ENCODE measurements at regions of chr2 and their contacts with region 1.

Region 1: GRCh38 chr2:144516981-144517865 is 2.7 kb downstream of the ZEB2 start:
- DNase-seq: peak; percentile 91
- H3K4me3 ChIP-seq: peak overlapping the region; percentile 44 to 81 (median 62)
- H3K27ac ChIP-seq: peak overlapping the region; percentile 92 to 99 (median 98)
- H3K4me1 ChIP-seq: peaks cover 6 to 72% (median 50%) of the 10 kb centered on the region in 6 donors
- H3K27me3 ChIP-seq: peaks cover 0 to 16% (median 0%) of the 10 kb centered on the region in 7 donors
- CTCF ChIP-seq: no peak
- POLR2A ChIP-seq: no peak

Region 2: GRCh38 chr2:144332356-144333142 is 184.7 kb before region 1 on chr2:
- intact Hi-C with region 1: loop called (anchors 5 kb)
- DNase-seq: peak; percentile 98
- H3K4me3 ChIP-seq: peak overlapping the region; percentile 43 to 94 (median 82)
- H3K27ac ChIP-seq: peak overlapping the region; percentile 69 to 96 (median 94)
- H3K4me1 ChIP-seq: peaks cover 6 to 49% (median 26%) of the 10 kb centered on the region in 6 donors
- H3K27me3 ChIP-seq: no peaks in the 10 kb centered on the region
- CTCF ChIP-seq: no peak
- POLR2A ChIP-seq: peak in 2 of 3 donors; percentile 38 to 56

Region 3: GRCh38 chr2:144461308-144461766 is 55.9 kb before region 1 on chr2:
- intact Hi-C with region 1: loop called (anchors 10 kb)
- DNase-seq: no peak
- H3K4me3 ChIP-seq: peak overlapping the region in 1 of 8 donors; percentile 13
- H3K27ac ChIP-seq: peak overlapping the region in 7 of 8 donors; percentile 56 to 84 (median 68)
- H3K4me1 ChIP-seq: peaks cover 64 to 95% (median 74%) of the 10 kb centered on the region in 6 donors
- H3K27me3 ChIP-seq: no peaks in the 10 kb centered on the region
- CTCF ChIP-seq: no peak
- POLR2A ChIP-seq: no peak

Region 4: GRCh38 chr2:144770616-144771230 is 253.5 kb after region 1 on chr2:
- intact Hi-C with region 1: no loop called
- DNase-seq: no peak
- H3K4me3 ChIP-seq: no peak overlapping the region
- H3K27ac ChIP-seq: no peak overlapping the region
- H3K4me1 ChIP-seq: peaks cover 0 to 5% (median 0%) of the 10 kb centered on the region in 6 donors
- H3K27me3 ChIP-seq: no peaks in the 10 kb centered on the region
- CTCF ChIP-seq: no peak
- POLR2A ChIP-seq: no peak

Region 5: DNA sequence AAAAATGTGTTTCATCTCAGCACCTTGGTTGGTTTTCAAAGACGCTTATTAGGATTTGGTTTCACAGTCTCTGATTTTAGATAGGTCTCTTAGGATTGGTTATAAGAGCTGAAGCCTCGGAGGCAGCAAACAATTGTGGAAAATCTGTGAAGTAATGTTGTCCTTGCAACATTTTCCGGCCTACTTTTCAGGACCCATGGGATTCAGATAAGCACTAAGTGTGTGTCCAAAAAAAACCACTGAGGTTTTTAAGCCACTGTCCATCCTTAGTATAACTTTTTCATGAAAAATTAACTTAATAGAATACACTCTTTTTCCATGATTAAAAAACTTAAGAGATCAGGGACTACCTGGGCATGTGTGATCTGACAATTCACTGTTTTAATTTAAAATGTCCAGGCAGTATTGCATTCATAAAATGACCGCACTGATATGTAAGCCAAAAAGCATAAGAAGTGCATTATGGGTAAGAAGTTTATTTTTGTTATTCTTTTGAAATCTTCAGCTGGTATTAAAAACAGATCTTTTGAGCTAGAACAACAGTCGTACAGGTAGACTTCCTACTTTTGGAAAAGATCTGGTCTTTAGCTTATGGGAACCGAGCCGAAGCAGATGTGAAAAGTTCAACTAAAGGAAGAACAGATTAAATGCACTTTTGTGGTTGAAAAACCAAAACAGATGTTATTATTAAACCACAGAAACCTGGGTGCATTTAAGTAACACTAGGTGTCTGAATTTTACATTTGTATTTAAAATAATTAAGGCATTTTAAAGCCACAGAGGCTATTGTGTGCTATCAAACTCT is 482.1 kb after region 1 on chr2:
- intact Hi-C with region 1: no loop called
- DNase-seq: no peak
- H3K4me3 ChIP-seq: no peak overlapping the region
- H3K27ac ChIP-seq: no peak overlapping the region
- H3K4me1 ChIP-seq: no peaks in the 10 kb centered on the region
- H3K27me3 ChIP-seq: no peaks in the 10 kb centered on the region
- CTCF ChIP-seq: no peak
- POLR2A ChIP-seq: no peak

Region 6: DNA sequence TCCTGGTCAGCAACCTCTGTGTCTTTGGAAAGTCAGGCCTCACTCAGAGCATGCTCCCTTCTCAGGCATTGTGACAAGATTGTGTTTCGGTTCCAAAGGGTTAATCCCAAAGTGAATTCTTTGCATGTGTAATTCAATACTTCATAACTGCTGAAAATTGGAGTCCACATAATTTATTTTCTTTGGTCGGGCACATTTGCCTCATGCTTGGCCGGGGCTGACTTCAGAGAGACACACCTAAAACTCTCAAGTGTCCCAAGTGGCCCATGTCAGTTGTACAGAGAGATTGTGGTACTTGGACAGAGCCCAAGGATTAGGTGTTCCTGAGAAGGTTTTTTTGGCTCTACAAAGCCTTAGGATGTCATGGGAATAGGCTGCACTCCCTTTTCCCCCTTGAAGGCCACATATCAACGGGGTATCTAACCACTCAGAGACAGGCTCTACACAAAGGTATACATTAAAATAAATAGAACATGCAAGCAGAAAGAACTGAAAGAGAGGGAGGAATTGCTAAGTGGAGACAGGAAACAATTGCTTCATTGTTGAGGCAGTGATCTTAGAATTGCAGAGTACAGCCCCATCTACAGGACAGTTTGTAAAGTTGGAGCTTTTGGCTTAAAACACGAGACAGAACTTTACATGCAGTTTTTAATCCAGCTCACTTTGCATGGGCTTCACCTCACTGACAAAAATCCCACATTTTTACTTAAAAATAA is 1235.0 kb after region 1 on chr2:
- intact Hi-C with region 1: loop called (anchors 10 kb)
- DNase-seq: no peak
- H3K4me3 ChIP-seq: peak overlapping the region in 1 of 8 donors; percentile 29
- H3K27ac ChIP-seq: peak overlapping the region; percentile 24 to 83 (median 69)
- H3K4me1 ChIP-seq: peaks cover 10 to 51% (median 41%) of the 10 kb centered on the region in 6 donors
- H3K27me3 ChIP-seq: no peaks in the 10 kb centered on the region
- CTCF ChIP-seq: peak; percentile 36 to 82 (median 66)
- POLR2A ChIP-seq: no peak

Measured in spleen (tissue), 13 donors.